Caco-2 (cell line): ENCODE measurements at regions of chr3 and their contacts with region 1.

Region 1: GRCh38 chr3:148727247-148727646 is 29.5 kb downstream of the AGTR1 start:
- DNase-seq: peak; percentile 41 to 56
- H3K4me3 ChIP-seq: no peak overlapping the region
- H3K4me3 Mint-ChIP-seq: no peak overlapping the region
- H3K27ac Mint-ChIP-seq: no peak overlapping the region
- H3K4me1 ChIP-seq: no peaks in the 10 kb centered on the region
- H3K4me1 Mint-ChIP-seq: peaks cover 6% of the 10 kb centered on the region
- H3K27me3 ChIP-seq: no peaks in the 10 kb centered on the region
- H3K27me3 Mint-ChIP-seq: peaks cover 3% of the 10 kb centered on the region
- CTCF ChIP-seq: peak; percentile 53 to 61

Region 2: DNA sequence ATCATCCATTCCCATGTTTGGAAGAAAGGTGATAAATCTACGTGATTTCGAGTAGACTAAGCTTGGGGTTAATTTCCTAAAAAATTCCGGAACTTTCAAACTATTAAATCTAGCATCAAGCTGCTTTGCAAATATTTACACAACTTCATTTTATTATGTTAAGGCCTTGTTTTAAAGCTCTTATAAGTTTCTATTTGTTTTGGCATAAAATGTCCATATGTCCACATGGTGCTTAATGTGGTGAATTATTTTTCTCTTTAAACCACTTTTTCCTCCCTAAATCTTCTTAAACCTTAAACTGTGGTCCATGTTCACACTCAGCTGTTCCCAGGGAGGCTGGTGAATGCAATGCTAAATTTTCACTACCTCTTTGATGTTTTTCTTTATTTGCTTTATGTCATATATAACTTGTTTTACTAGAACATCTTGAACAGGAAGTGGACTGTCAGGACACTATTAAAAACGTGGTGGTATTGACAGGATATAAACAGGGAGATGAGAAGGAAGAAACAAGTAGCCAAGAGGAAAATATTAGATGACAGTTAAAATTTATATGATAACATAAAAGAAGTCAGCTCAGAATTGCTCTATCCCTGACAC is 102.1 kb before region 1 on chr3:
- CTCF ChIA-PET with region 1: no interaction called
- POLR2A ChIA-PET with region 1: no interaction called
- intact Hi-C with region 1: no loop called
- DNase-seq: no peak
- H3K4me3 ChIP-seq: no peak overlapping the region
- H3K4me3 Mint-ChIP-seq: no peak overlapping the region
- H3K27ac Mint-ChIP-seq: no peak overlapping the region
- H3K4me1 ChIP-seq: no peaks in the 10 kb centered on the region
- H3K4me1 Mint-ChIP-seq: peaks cover 7% of the 10 kb centered on the region
- H3K27me3 ChIP-seq: no peaks in the 10 kb centered on the region
- H3K27me3 Mint-ChIP-seq: no peaks in the 10 kb centered on the region
- CTCF ChIP-seq: no peak

Region 3: GRCh38 chr3:148739720-148740119 is 12.5 kb after region 1 on chr3:
- CTCF ChIA-PET with region 1: no interaction called
- POLR2A ChIA-PET with region 1: no interaction called
- intact Hi-C with region 1: no loop called
- DNase-seq: no peak
- H3K4me3 ChIP-seq: no peak overlapping the region
- H3K4me3 Mint-ChIP-seq: no peak overlapping the region
- H3K27ac Mint-ChIP-seq: no peak overlapping the region
- H3K4me1 ChIP-seq: no peaks in the 10 kb centered on the region
- H3K4me1 Mint-ChIP-seq: no peaks in the 10 kb centered on the region
- H3K27me3 ChIP-seq: no peaks in the 10 kb centered on the region
- H3K27me3 Mint-ChIP-seq: peaks cover 2% of the 10 kb centered on the region
- CTCF ChIP-seq: no peak

Region 4: DNA sequence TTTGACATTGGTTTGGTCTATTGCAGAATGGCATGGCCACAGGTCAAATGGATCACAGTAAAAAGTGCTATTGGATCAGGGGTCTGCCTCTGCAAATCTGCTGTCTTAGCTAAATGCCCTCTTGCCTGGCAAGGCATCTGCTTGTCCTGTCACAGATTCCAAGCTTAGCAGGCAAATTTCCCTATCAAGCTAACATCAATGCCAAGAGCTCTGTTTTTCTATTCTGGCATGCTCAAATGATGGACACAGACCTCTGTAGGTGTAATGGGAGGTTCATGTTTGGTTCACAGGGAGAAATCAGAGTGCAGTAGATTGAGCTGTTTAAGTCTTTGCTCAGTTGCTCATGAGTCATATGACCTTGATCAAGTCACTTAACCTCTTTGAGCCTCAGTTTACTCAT is 45.6 kb after region 1 on chr3:
- CTCF ChIA-PET with region 1: no interaction called
- POLR2A ChIA-PET with region 1: no interaction called
- intact Hi-C with region 1: no loop called
- DNase-seq: no peak
- H3K4me3 ChIP-seq: no peak overlapping the region
- H3K4me3 Mint-ChIP-seq: no peak overlapping the region
- H3K27ac Mint-ChIP-seq: no peak overlapping the region
- H3K4me1 ChIP-seq: no peaks in the 10 kb centered on the region
- H3K4me1 Mint-ChIP-seq: no peaks in the 10 kb centered on the region
- H3K27me3 ChIP-seq: no peaks in the 10 kb centered on the region
- H3K27me3 Mint-ChIP-seq: no peaks in the 10 kb centered on the region
- CTCF ChIP-seq: no peak

Region 5: DNA sequence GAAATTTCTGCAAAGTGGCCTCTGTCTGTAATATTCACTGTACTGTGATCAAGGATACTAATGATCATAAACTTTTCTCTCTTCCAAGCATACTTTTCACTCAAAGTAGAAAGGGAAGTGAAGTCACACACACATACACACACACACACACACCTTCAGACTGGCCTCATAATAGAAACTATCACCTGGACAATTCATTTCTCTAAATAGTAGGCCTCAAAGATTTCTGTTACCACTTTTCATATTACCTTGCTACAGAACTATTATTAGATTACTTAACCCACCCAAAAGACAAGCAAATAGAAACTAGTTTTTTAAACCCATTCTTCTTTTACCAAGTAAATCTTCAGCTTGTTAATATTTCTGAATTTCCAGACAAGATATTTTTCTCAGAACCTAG is 112.6 kb after region 1 on chr3:
- CTCF ChIA-PET with region 1: no interaction called
- POLR2A ChIA-PET with region 1: no interaction called
- intact Hi-C with region 1: loop called (anchors 5 kb)
- DNase-seq: no peak
- H3K4me3 ChIP-seq: no peak overlapping the region
- H3K4me3 Mint-ChIP-seq: no peak overlapping the region
- H3K27ac Mint-ChIP-seq: no peak overlapping the region
- H3K4me1 ChIP-seq: no peaks in the 10 kb centered on the region
- H3K4me1 Mint-ChIP-seq: no peaks in the 10 kb centered on the region
- H3K27me3 ChIP-seq: no peaks in the 10 kb centered on the region
- H3K27me3 Mint-ChIP-seq: no peaks in the 10 kb centered on the region
- CTCF ChIP-seq: no peak

Region 6: DNA sequence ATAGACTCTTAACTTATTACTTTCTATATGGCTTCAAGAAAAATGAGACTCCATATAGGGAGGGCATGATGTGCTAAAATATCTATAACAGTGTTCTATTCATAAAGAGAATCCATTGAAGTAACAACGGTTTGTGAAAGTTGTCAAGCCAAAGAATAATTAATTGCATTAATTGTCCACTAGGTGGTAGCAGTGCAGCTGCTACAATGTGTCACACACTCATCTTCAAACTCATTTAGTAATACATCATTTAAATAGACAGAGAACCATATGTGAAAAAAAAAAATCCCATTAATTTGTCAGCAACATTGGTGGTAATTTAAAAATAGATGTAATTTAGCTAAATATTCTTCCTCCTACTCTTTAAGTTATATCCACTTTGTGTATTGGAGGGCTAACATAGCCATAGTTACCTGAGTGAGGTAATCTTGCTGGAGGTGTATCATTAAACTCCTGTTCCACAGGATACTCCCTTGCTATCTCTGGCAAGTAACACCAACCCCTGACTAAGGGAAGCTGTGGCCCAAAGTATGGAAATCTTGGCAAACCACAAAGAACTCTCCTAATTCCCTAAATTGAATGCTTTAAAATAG is 134.1 kb after region 1 on chr3:
- CTCF ChIA-PET with region 1: no interaction called
- POLR2A ChIA-PET with region 1: no interaction called
- intact Hi-C with region 1: loop called (anchors 5 kb)
- DNase-seq: peak in 1 of 2 experiments; percentile 20
- H3K4me3 ChIP-seq: no peak overlapping the region
- H3K4me3 Mint-ChIP-seq: no peak overlapping the region
- H3K27ac Mint-ChIP-seq: no peak overlapping the region
- H3K4me1 ChIP-seq: no peaks in the 10 kb centered on the region
- H3K4me1 Mint-ChIP-seq: no peaks in the 10 kb centered on the region
- H3K27me3 ChIP-seq: no peaks in the 10 kb centered on the region
- H3K27me3 Mint-ChIP-seq: peaks cover 5% of the 10 kb centered on the region
- CTCF ChIP-seq: peak in 1 of 2 experiments; percentile 42

Region 7: GRCh38 chr3:148880681-148881080 is 153.4 kb after region 1 on chr3:
- CTCF ChIA-PET with region 1: interaction called, 3 read pairs
- POLR2A ChIA-PET with region 1: no interaction called
- intact Hi-C with region 1: loop called (anchors 1 kb)
- DNase-seq: peak in 1 of 2 experiments; percentile 19
- H3K4me3 ChIP-seq: no peak overlapping the region
- H3K4me3 Mint-ChIP-seq: no peak overlapping the region
- H3K27ac Mint-ChIP-seq: no peak overlapping the region
- H3K4me1 ChIP-seq: no peaks in the 10 kb centered on the region
- H3K4me1 Mint-ChIP-seq: no peaks in the 10 kb centered on the region
- H3K27me3 ChIP-seq: no peaks in the 10 kb centered on the region
- H3K27me3 Mint-ChIP-seq: peaks cover 14% of the 10 kb centered on the region
- CTCF ChIP-seq: peak; percentile 52 to 55

Region 8: GRCh38 chr3:148943506-148944205 is 216.4 kb after region 1 on chr3:
- CTCF ChIA-PET with region 1: no interaction called
- POLR2A ChIA-PET with region 1: no interaction called
- intact Hi-C with region 1: loop called (anchors 1 kb)
- DNase-seq: peak in 1 of 2 experiments; percentile 61
- H3K4me3 ChIP-seq: no peak overlapping the region
- H3K4me3 Mint-ChIP-seq: no peak overlapping the region
- H3K27ac Mint-ChIP-seq: no peak overlapping the region
- H3K4me1 ChIP-seq: no peaks in the 10 kb centered on the region
- H3K4me1 Mint-ChIP-seq: no peaks in the 10 kb centered on the region
- H3K27me3 ChIP-seq: no peaks in the 10 kb centered on the region; the same call in 1 of the 2 replicates
- H3K27me3 Mint-ChIP-seq: peaks cover 14% of the 10 kb centered on the region
- CTCF ChIP-seq: peak; percentile 55 to 69